Common myeloid progenitor, CD34-positive (primary cell): ENCODE measurements at regions of chr6 and their contacts with region 1.

Region 1: DNA sequence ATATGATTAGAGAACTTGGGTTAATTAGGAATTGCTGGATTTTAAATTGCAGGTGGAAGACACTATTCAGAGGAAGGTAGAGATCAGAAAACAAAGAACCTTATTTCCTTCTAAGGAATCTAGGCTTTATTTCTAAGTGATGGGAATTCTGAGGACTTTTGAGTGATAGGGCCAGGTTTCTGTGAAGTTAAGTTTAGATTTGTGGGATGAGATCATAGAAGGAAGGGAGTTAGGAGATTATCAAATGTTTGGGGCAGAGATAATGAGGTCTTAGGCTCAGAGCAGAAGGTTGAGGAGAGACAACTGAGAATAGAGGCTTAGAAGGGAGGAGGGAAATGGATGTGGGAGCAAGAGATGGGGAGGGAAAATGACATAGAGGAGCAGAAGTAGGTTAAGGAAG is 109.7 kb upstream of the MMS22L start:
- DNase-seq: no peak
- H3K4me3 ChIP-seq: no peak overlapping the region
- H3K27ac ChIP-seq: no peak overlapping the region
- H3K4me1 ChIP-seq: no peaks in the 10 kb centered on the region
- H3K27me3 ChIP-seq: peaks cover 0 to 5% (median 0%) of the 10 kb centered on the region in 5 experiments

Region 2: DNA sequence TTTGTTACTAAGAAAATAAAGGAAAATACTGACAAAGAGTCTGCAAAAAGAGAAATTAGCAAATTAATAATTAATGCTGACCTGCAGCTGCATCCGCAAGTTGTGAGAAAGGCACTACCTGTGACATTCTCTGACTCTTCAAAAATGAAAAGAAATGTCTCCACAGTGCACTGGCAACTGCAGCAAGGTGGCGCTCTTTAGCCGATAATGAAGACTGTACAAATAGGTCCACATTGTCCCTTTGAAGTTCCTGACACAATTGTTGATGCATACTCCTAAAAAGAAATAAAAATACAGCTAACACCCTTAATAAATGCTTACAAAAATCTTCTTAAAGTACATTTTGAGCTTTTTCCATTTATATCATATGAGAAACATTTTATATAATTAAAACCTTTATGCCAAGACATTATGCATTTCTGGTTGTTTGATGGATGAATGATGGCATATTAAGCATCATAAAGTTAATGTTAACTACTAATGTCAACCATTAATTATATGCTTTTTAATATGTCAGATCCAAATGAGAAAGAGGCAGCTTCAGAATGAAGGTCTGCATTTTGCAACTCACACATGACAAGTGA is 206.2 kb before region 1 on chr6:
- CTCF ChIA-PET with region 1: interaction called, 10 read pairs
- POLR2A ChIA-PET with region 1: no interaction called
- DNase-seq: peak; percentile 57 to 79 (median 69)
- H3K4me3 ChIP-seq: no peak overlapping the region
- H3K27ac ChIP-seq: no peak overlapping the region
- H3K4me1 ChIP-seq: no peaks in the 10 kb centered on the region
- H3K27me3 ChIP-seq: no peaks in the 10 kb centered on the region

Region 3: DNA sequence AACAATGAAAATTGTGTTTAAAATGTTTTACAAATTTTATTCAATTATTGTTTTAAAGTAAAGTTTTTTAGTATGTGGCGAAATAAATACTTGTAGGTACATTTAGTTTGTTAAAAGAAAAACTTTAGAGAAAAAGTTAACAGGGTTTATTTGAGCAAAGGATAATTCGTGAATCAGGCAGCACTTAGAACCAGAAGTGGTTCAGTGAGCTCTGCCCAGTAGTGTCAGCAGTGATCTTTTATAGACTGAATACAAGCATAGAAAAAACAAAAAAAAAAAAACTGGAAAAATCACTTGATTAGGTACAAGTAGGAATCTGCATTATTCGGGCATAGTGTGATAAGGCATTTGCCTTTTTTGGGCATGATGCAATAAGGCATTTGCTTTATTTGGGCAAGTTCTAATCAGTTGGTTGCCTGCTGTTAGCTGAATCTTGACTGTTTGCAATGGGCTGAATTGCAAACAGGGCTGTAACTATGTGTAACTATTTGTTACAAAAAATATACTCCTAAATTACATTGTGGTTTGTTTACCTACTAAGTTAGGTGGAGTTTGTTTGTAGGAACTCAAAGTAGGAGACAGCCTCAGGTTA is 13.2 kb after region 1 on chr6:
- CTCF ChIA-PET with region 1: no interaction called
- POLR2A ChIA-PET with region 1: no interaction called
- DNase-seq: no peak
- H3K4me3 ChIP-seq: no peak overlapping the region
- H3K27ac ChIP-seq: no peak overlapping the region
- H3K4me1 ChIP-seq: no peaks in the 10 kb centered on the region
- H3K27me3 ChIP-seq: peaks cover 0 to 3% (median 0%) of the 10 kb centered on the region in 5 experiments